Heart right ventricle (tissue), 16 donors: ENCODE measurements at regions of chr7 and their contacts with region 1.

Region 1: GRCh38 chr7:39623018-39623731 is at the start of gene RALA:
- DNase-seq: peak; percentile 92 to 94
- ATAC-seq: peak; percentile 98 to 99 (median 99)
- H3K4me3 ChIP-seq: peak within 1 kb of the TSS; percentile 63 to 92 (median 88)
- H3K27ac ChIP-seq: peak within 1 kb of the TSS; percentile 49 to 97 (median 94)
- H3K4me1 ChIP-seq: peaks cover 0 to 66% (median 46%) of the 10 kb centered on the region in 9 donors
- H3K27me3 ChIP-seq: no peaks in the 10 kb centered on the region
- CTCF ChIP-seq: peak in 1 of 9 donors; percentile 8
- total RNA-seq, gene RALA: 15.2 to 32.7 (median 22.4) TPM

Region 2: DNA sequence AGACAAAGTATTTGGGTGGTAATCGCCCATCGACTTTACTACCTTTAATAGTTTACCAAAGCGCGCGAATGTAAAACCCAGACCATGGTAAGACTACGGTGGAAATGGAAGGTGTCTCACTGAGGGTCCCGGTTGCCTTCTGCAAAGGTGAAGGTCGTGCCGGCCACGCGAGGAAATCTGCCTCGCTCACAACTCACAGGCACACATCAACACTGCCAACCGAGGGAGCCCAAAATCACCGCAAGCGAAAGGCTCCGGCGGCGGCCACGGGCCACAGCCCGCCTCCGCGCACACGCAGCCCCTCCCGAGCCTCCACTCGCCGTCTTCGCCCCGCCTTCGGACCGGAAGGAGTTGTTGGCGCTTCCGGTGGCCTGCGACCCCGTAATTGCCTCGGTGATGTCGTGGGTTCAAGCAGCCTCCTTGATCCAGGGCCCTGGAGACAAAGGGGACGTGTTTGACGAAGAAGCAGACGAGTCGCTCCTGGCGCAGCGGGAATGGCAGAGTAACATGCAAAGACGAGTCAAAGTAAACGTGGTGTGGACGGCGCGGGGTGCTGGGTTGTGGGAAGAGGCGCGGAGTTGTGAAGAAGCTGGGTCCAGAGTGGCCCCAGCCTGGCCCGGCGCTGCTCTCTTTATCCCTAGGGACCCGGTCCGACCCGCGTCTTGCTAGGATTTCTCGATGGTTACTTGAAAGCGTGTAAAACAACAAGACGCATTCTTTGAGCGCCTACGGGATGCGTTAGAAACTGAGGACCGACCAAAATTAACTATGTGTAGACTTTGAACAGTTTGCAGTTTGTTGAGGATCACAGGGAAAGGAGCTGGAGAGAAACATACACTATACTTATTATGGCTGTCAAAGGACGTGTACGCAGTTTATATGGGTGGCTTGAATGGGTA is 56.9 kb before region 1 on chr7 and contains the start of gene YAE1:
- intact Hi-C with region 1: no loop called
- DNase-seq: peak; percentile 87 to 88
- ATAC-seq: peak; percentile 97 to 99 (median 99)
- H3K4me3 ChIP-seq: peak within 1 kb of the TSS; percentile 51 to 92 (median 71)
- H3K27ac ChIP-seq: peak within 1 kb of the TSS in 9 of 10 donors; percentile 36 to 86 (median 80)
- H3K4me1 ChIP-seq: peaks cover 0 to 20% (median 13%) of the 10 kb centered on the region in 9 donors
- H3K27me3 ChIP-seq: no peaks in the 10 kb centered on the region
- CTCF ChIP-seq: no peak
- total RNA-seq, gene YAE1: 10.8 to 19.6 (median 15.0) TPM

Region 3: DNA sequence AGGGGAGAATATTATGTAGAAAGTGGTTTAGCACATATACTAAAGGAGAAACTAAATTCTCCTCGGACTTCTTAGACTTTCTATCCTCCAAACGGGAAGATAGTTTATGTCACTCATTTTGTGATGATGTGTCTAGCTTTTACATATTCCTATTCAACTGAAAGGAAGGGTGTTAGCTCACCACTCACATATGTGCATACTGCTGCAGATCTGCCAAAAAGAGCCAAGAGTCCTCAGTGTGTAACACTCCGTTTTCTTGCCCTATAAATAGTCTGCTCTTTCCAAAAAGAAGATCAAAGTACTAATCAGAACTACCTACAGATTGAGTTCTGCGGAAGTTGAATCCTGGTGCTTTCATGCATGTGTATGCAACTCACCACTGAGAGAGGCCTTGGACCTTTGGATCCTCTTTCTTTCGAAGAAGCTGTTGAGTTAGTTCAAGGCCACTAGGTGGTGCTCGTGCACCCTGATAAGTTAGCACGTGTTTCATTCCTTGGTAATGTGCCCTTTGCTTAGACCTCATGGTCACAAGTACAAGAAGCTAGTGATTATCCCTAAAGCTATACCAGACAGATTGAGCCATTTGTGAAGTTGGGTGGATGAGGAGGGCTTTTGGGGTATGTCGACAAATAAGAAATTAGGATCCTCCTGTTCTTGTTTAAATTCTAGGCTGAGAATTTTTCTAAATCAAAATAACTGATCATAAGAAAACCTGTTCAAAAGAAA is 42.9 kb before region 1 on chr7:
- intact Hi-C with region 1: loop called in 2 of 10 experiments (anchors 5 kb)
- DNase-seq: peak; percentile 47 to 81
- ATAC-seq: peak; percentile 87 to 94 (median 90)
- H3K4me3 ChIP-seq: no peak overlapping the region
- H3K27ac ChIP-seq: no peak overlapping the region
- H3K4me1 ChIP-seq: peaks cover 0 to 4% (median 0%) of the 10 kb centered on the region in 9 donors
- H3K27me3 ChIP-seq: no peaks in the 10 kb centered on the region
- CTCF ChIP-seq: peak; percentile 75 to 91 (median 83)

Region 4: DNA sequence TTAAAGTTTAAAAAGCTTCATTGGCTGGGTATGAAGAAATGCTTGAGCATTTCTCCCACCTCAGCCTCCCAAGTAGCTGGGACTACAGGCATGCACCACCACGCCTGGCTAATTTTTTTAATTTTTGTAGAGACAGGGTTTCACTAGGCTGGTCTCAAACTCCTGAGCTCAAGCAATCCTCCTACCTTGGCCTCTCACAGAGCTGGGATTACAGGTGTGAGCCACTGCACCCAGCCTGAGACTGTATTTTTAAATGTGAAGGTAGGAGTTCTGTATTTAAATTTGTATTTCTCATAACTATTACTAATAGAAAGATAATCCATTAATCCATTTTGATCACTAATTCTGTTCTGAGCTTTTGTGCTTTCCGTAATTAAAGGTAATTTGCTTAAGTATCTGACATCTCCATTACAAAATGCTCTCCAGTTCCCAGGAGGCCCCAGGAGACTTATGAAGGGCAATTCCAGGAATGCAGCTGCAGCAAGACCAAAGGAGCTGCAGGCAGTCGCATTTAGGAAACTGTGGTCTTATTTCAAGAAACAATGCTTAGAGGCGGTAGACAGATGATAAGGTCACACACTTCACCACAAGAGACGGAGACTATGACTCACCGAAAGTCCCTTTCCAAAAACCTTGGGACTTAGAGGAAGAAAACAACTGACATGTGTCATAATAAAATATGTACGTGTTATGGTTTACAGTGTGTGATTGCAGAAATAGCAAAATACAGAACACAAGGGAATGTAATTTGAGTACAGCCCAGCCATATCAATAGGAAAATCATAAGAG is 33.7 kb before region 1 on chr7:
- intact Hi-C with region 1: loop called in 2 of 10 experiments (anchors 5 kb)
- DNase-seq: peak in 1 of 2 donors; percentile 16
- ATAC-seq: peak; percentile 38 to 90 (median 82)
- H3K4me3 ChIP-seq: no peak overlapping the region
- H3K27ac ChIP-seq: peak overlapping the region in 4 of 10 donors; percentile 8 to 61 (median 30)
- H3K4me1 ChIP-seq: peaks cover 0 to 34% (median 12%) of the 10 kb centered on the region in 9 donors
- H3K27me3 ChIP-seq: no peaks in the 10 kb centered on the region
- CTCF ChIP-seq: no peak

Region 5: DNA sequence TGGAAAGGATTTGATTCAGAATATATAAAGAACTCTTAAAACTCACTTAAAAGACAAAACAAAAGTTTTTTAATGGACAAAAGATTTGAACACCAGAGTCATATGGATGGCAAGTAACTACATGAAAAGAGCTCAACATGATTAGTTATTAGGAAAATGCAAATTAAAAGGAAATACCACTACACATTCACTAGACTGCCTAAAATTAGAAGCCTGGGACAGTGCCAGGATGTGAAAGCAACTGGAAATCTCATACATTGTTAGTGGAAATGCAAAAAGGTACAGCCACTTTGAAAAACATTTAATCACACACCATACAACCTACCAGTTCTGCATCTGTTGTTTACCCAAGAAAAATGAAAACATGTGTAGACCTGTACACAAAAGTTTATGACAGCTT is 49.0 kb after region 1 on chr7:
- intact Hi-C with region 1: loop called in 2 of 10 experiments (anchors 10 kb)
- DNase-seq: peak in 1 of 2 donors; percentile 32
- ATAC-seq: peak in 1 of 8 donors; percentile 15
- H3K4me3 ChIP-seq: no peak overlapping the region
- H3K27ac ChIP-seq: peak overlapping the region in 1 of 10 donors; percentile 31
- H3K4me1 ChIP-seq: peaks cover 3 to 63% (median 35%) of the 10 kb centered on the region in 9 donors
- H3K27me3 ChIP-seq: no peaks in the 10 kb centered on the region
- CTCF ChIP-seq: no peak

Region 6: DNA sequence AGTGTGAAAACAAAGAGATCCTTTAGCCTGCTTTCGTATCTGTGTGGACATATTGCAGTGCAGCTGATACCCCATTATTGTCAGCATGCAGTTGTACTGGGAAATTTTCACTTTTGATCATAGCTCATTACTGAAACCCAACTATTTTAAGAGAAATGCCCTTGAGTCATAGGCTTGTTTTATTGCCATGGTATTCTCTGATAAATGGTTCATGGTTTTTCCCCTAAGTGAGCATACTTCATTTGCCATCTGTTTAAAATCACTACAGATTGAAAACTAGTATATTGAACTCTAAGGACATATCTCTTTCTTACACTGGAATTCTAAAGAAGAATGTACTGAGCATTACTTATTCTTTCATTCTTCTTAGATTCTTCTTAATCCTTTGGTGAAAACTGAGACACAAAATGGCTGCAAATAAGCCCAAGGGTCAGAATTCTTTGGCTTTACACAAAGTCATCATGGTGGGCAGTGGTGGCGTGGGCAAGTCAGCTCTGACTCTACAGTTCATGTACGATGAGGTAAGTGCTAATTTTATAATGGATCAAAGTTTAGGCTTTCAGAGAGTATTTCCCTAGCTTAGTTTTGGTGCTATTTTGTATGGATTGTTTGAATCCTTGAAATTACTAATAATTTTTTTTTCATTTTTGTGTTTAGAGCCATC is 63.2 kb after region 1 on chr7:
- intact Hi-C with region 1: loop called in 2 of 10 experiments (anchors 5 to 10 kb)
- DNase-seq: no peak
- ATAC-seq: no peak
- H3K4me3 ChIP-seq: no peak overlapping the region
- H3K27ac ChIP-seq: no peak overlapping the region
- H3K4me1 ChIP-seq: peaks cover 10 to 39% (median 31%) of the 10 kb centered on the region in 9 donors
- H3K27me3 ChIP-seq: no peaks in the 10 kb centered on the region
- CTCF ChIP-seq: no peak

Region 7: DNA sequence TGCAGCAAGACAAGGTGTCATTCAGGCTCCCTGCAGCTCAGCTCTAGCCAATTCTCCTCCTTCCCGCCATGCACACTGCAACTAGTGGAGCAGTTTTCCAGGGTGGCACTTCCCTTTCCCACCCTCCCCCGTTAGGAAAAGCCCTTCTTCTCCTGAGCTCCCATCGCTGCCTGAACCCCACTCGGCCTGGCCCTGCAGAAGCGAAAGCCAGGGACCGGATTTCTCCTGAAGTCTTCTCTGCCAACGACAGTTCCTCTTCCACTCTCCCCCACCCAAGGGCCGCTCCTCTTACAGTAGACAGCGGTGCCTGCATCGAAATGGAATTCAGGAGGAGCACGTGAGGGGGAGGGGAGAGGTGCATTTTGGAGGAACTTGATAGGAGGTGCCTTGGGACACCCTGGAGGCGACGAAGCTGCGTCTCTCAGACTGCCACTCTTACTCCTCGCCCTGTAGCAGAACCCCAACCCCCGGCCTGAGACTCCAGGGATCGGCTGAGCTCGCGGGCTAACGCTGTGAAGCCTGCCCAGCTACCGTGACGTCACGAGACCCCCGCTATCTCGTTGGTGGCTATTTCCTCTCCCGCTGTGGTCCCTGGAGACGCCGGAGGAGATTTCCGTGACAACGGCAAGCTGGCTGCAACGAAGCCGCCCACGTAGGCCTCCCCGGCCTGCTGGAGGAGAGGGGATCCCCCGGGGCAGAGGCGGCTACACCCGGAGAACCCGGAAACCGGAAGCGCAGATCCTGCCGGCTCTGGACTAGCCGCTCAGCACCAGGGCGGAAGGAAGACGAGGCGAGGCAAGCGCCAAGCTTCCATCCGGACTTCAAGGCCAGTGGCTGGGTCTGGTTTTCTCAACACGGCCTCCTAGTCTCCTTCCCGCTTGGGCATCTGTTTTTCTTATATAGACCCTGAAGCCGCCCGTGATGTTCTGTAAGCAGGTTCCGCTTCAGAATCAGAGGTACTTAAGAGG is 109.9 kb after region 1 on chr7:
- intact Hi-C with region 1: loop called in 6 of 10 experiments (anchors 2 to 10 kb)
- DNase-seq: peak; percentile 96 to 98
- ATAC-seq: peak; percentile 96 to 98 (median 97)
- H3K4me3 ChIP-seq: peak overlapping the region; percentile 11 to 64 (median 60)
- H3K27ac ChIP-seq: peak overlapping the region; percentile 12 to 89 (median 72)
- H3K4me1 ChIP-seq: peaks cover 0 to 33% (median 22%) of the 10 kb centered on the region in 9 donors
- H3K27me3 ChIP-seq: no peaks in the 10 kb centered on the region
- CTCF ChIP-seq: no peak